Activated naive CD4-positive, alpha-beta T cell treated with anti-CD3 and anti-CD28 coated beads for 36 hours (primary cell): ENCODE measurements at regions of chr14 and their contacts with region 1.

Region 1: GRCh38 chr14:55354500-55354899 is 57.1 kb downstream of the ATG14 start:
- DNase-seq: peak; percentile 80
- H3K4me3 Mint-ChIP-seq: peak overlapping the region; percentile 20
- H3K27ac Mint-ChIP-seq: peak overlapping the region; percentile 74
- H3K4me1 Mint-ChIP-seq: peaks cover 21% of the 10 kb centered on the region
- H3K27me3 Mint-ChIP-seq: no peaks in the 10 kb centered on the region

Region 2: DNA sequence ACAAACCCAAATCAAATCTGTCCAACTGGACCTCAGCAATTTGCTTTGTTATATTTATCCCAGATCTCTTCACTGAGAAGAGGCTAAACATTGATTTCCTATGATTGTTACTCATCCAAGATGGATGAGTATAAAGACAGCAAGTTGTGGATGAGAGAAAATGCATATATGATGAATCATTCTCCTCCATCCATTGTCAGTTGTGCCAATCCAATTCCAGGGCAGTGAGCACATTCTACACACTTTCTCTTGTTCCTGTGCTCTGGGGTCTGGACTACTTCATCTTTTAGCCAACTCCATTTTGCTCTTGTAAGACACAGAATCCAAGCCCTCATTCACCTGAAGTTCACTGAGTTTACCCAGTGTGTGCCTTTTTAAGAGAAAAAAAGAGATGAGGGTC is 557.5 kb before region 1 on chr14:
- CTCF ChIA-PET with region 1: no interaction called
- intact Hi-C with region 1: no loop called
- DNase-seq: no peak
- H3K4me3 Mint-ChIP-seq: no peak overlapping the region
- H3K27ac Mint-ChIP-seq: no peak overlapping the region
- H3K4me1 Mint-ChIP-seq: no peaks in the 10 kb centered on the region
- H3K27me3 Mint-ChIP-seq: peaks cover 10% of the 10 kb centered on the region

Region 3: DNA sequence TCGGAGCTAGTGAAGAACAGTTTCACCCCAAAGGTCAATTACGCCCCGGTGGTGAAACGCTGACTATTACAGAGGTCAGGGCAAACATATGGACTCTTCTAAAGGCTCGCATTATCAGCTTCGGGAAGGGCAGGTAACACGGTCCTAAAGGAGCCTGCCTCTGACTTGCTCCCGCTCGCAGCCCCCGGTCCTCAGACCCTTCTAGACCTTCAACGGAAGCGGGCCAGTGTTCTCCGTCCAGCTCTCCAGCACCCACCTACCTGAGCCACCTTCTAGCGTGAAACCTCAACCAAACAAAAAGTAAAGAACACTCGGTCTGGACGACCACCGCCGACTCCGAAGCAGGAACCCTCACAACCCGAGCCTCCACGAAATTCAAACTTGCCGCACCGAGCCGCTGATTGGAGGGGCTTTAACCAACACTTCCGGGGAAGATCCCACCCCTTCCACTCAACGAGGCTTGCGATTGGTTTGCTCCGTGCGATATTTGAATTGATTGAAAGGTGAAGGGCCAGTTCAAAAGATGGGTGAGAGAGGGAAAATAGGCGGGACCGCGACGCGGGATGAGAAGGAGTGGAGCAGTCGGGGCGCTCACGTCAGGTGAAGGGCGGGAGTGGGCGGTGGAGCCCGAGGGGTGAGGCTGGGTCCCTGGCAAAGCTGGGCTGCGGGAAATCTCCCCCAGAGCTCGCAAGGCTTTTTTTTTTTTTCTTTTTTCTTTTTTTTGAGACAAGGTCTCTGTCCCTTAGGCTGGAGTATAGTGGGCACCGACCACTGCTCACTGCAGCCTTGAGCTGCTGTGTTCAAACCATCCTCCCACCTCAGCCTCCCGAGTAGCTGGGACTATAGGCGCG is 163.1 kb before region 1 on chr14 and contains the start of gene DLGAP5:
- CTCF ChIA-PET with region 1: interaction called, 7 read pairs
- intact Hi-C with region 1: loop called (anchors 1 kb)
- DNase-seq: peak; percentile 97
- H3K4me3 Mint-ChIP-seq: peak within 1 kb of the TSS; percentile 99
- H3K27ac Mint-ChIP-seq: peak within 1 kb of the TSS; percentile 89
- H3K4me1 Mint-ChIP-seq: peaks cover 26% of the 10 kb centered on the region
- H3K27me3 Mint-ChIP-seq: peaks cover 2% of the 10 kb centered on the region
- total RNA-seq, gene DLGAP5: 117 to 120 TPM

Region 4: GRCh38 chr14:55245657-55246268 is 108.7 kb before region 1 on chr14:
- CTCF ChIA-PET with region 1: interaction called, 11 read pairs
- intact Hi-C with region 1: loop called (anchors 1 kb)
- DNase-seq: peak; percentile 53
- H3K4me3 Mint-ChIP-seq: no peak overlapping the region
- H3K27ac Mint-ChIP-seq: no peak overlapping the region
- H3K4me1 Mint-ChIP-seq: peaks cover 2% of the 10 kb centered on the region
- H3K27me3 Mint-ChIP-seq: peaks cover 4% of the 10 kb centered on the region

Region 5: DNA sequence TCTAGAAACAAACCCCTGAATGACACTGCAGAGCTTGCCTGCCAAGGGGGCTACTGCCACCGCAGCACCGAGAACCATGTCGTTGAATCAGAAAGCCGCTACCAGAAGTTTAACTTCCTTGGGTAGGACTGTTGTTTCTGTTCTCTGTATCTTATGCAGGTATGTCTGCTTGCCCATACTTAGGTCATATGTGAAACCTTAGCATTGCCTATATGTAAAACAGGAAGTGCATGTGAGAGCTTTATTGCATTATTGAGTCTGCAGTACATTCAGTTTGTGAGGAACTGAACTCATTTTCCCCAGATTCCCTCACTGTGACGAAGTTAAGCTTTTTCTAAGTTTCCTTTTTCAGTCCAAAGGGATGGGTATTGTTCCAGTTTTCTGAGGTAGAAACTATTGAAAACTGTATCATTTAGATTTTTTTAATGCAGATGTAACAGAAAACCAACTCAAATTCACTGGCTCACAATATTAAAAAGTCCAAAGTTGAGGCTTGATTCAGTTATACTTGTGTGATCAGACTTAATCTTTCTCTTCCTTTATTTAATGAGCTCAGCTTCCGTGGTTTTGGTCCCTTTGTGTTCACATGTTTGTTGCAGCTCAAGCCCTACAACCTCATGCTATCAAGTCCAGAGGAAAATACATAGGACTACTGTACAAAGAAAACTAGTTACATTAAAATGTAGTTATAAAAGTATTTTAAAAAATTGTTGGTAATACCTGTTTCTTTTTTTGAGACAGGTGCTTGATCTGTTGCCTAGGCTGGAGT is 76.3 kb before region 1 on chr14:
- CTCF ChIA-PET with region 1: interaction called, 131 read pairs
- intact Hi-C with region 1: no loop called
- DNase-seq: peak; percentile 47
- H3K4me3 Mint-ChIP-seq: peak overlapping the region; percentile 41
- H3K27ac Mint-ChIP-seq: peak overlapping the region; percentile 60
- H3K4me1 Mint-ChIP-seq: peaks cover 64% of the 10 kb centered on the region
- H3K27me3 Mint-ChIP-seq: no peaks in the 10 kb centered on the region

Region 6: DNA sequence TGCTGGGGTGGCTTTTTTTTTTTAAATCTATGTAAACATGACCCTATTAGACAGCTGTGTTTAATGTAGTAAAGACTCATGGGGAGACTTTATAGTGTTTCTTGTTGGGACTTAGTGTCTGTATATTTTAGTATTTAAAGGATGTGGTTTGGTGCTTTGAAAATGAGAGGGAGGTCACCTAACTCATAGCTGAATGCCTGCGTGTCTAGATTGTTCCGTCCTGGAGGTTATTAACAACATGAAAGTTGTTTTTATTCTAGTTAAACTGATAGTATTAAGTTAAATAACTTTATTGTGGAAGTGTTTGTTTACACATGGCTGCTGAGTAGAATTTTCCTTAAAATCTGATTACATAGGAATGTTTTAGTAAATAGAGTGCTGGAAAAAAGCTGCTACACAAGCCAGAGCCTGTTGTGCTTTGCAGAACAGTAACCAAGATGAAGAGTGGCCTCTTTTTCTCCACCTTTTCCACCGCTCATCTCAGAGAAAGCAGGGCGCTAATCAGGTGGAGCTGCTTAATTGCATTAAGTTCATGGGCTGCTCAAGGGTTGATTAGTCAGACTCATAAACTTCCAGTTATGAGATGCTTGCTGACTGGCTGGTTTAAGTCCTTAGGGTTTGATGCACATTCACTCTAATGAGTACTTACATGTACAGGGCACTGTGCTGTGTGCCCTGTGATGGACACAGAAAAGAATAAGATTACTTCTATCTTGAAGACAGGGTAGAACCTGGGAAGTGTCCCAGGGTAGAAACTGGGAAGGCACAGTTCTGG is 20.6 kb before region 1 on chr14:
- CTCF ChIA-PET with region 1: interaction called, 31 read pairs
- intact Hi-C with region 1: no loop called
- DNase-seq: peak; percentile 21
- H3K4me3 Mint-ChIP-seq: peak overlapping the region; percentile 10
- H3K27ac Mint-ChIP-seq: peak overlapping the region; percentile 78
- H3K4me1 Mint-ChIP-seq: peaks cover 82% of the 10 kb centered on the region
- H3K27me3 Mint-ChIP-seq: no peaks in the 10 kb centered on the region

Region 7: GRCh38 chr14:55430024-55430690 is 75.7 kb after region 1 on chr14:
- CTCF ChIA-PET with region 1: interaction called, 12 read pairs
- intact Hi-C with region 1: loop called (anchors 1 kb)
- DNase-seq: peak; percentile 71
- H3K4me3 Mint-ChIP-seq: no peak overlapping the region
- H3K27ac Mint-ChIP-seq: peak overlapping the region; percentile 62
- H3K4me1 Mint-ChIP-seq: peaks cover 29% of the 10 kb centered on the region
- H3K27me3 Mint-ChIP-seq: no peaks in the 10 kb centered on the region

Region 8: GRCh38 chr14:55609681-55610080 is 255.2 kb after region 1 on chr14:
- CTCF ChIA-PET with region 1: no interaction called
- intact Hi-C with region 1: no loop called
- DNase-seq: no peak
- H3K4me3 Mint-ChIP-seq: no peak overlapping the region
- H3K27ac Mint-ChIP-seq: no peak overlapping the region
- H3K4me1 Mint-ChIP-seq: peaks cover 29% of the 10 kb centered on the region
- H3K27me3 Mint-ChIP-seq: no peaks in the 10 kb centered on the region